ENCODE measurements at regions of chr3 and their contacts with region 1.

Region 1: DNA sequence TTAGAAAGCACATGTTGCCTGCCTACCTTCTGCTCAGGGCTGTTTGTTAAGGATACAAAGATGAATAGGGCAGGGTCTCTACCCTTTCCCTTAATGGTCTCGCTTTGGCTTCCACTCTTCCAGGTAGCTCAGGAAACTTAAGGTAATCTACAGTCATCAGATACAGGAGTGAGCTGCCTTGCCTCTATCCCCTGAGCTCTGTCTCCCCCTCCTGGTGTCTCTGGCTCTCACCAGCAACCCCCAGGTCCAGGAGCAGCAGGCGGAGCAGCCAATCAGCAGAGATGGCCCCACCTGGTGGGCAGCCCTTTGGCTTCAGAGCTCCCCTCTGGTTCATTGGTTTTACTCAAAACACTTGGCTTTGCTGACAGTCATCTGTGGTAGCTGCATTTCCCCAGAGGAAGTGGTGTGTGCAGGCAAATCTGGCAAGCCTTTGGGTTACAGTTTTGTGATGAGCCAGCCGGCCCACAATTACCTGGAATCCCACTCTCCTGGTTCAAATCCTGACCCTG is 8.5 kb upstream of the CX3CR1 start:
- DNase-seq: peak; percentile 74 to 82
- H3K4me3 ChIP-seq: no peak overlapping the region
- H3K27ac ChIP-seq: no peak overlapping the region
- H3K4me1 ChIP-seq: peaks cover 4% of the 10 kb centered on the region; the same call in 1 of the 2 replicates
- H3K27me3 ChIP-seq: no peaks in the 10 kb centered on the region
- CTCF ChIP-seq: peak; percentile 88

Region 2: DNA sequence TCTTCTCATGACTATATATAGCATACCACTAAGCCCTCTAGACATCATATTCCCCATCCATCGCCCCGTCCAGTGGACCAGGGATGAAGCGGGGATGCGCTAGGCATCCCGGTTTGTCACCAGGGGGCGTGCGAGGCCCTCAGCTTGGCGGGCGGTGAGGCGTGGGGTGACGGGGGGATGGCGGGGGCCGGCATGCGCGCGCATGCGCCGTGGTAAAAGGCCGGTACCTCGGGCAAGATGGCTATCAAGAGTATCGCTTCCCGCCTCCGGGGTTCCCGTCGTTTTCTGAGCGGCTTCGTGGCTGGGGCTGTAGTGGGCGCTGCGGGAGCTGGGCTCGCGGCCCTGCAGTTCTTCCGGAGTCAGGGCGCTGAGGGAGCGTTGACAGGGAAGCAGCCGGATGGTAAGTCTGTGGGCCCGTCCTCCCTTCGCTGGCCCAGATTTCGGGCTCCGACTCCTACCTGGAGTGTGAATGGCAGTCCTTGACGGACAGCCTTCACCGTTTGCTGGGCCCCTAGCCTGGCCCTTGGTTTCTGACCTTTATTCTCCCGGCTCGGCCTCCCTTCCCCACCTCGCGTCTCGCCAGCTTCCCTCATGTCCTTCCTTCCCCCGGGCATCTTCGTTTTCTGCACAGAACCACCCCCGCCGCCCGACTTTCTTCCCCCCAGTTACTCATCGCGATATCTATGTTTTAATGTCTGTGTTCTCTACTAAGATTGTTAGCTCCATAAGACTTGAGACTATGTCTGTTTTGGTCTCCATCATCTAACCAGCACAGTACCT is 792.0 kb before region 1 on chr3 and contains the start of gene EXOG:
- CTCF ChIA-PET with region 1: no interaction called
- POLR2A ChIA-PET with region 1: no interaction called
- intact Hi-C with region 1: loop called (anchors 1 kb)
- DNase-seq: peak; percentile 71 to 88
- H3K4me3 ChIP-seq: peak within 1 kb of the TSS; percentile 88
- H3K27ac ChIP-seq: no peak within 1 kb of the TSS
- H3K4me1 ChIP-seq: 0 out of 2 replicates have a peak, but pooled peaks cover 4% of the 10 kb centered on the region
- H3K27me3 ChIP-seq: no peaks in the 10 kb centered on the region
- CTCF ChIP-seq: peak; percentile 85
- total RNA-seq, gene EXOG: 7.5 and 9.3 TPM in 2 replicates

Region 3: DNA sequence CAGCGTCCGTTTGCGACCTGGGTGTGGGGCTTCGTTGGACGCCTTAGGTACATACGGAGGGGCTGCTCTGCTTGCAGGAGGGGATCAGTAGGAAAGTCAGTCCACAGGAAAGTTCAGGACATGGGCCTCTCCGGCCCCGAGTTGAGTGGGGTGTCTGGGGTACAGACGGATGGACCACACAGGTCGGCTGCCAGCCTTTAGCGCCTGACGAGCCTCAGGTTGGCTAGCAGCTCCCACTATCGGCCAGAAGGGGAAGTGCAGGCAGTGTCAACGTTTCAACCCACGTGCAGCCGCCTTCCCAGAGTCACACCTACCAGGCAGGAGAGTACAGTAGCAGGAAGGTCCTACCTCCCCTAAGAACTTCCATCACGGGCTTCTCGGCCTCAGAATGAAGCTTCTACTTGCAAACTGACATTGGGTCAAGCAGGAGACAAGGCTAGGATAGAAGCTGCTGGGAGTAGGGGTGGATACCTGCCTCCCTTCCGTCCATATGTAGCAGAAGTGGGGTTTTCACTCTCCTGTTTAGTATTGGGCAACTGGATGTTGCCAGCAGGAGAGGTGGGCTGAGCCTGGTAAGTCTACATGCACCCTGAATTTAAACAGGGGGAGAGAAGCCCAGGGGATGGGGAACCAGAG is 637.1 kb before region 1 on chr3:
- CTCF ChIA-PET with region 1: no interaction called
- POLR2A ChIA-PET with region 1: no interaction called
- intact Hi-C with region 1: loop called (anchors 10 kb)
- DNase-seq: peak in 1 of 2 experiments; percentile 50
- H3K4me3 ChIP-seq: no peak overlapping the region
- H3K27ac ChIP-seq: no peak overlapping the region
- H3K4me1 ChIP-seq: no peaks in the 10 kb centered on the region
- H3K27me3 ChIP-seq: no peaks in the 10 kb centered on the region; the same call in 1 of the 2 replicates
- CTCF ChIP-seq: peak; percentile 83

Region 4: GRCh38 chr3:39025222-39025970 is 263.0 kb before region 1 on chr3:
- CTCF ChIA-PET with region 1: interaction called, 4 read pairs
- POLR2A ChIA-PET with region 1: no interaction called
- intact Hi-C with region 1: loop called (anchors 1 kb)
- DNase-seq: no peak
- H3K4me3 ChIP-seq: no peak overlapping the region
- H3K27ac ChIP-seq: no peak overlapping the region
- H3K4me1 ChIP-seq: no peaks in the 10 kb centered on the region
- H3K27me3 ChIP-seq: peaks cover 29% of the 10 kb centered on the region; the same call in 1 of the 2 replicates
- CTCF ChIP-seq: no peak

Region 5: DNA sequence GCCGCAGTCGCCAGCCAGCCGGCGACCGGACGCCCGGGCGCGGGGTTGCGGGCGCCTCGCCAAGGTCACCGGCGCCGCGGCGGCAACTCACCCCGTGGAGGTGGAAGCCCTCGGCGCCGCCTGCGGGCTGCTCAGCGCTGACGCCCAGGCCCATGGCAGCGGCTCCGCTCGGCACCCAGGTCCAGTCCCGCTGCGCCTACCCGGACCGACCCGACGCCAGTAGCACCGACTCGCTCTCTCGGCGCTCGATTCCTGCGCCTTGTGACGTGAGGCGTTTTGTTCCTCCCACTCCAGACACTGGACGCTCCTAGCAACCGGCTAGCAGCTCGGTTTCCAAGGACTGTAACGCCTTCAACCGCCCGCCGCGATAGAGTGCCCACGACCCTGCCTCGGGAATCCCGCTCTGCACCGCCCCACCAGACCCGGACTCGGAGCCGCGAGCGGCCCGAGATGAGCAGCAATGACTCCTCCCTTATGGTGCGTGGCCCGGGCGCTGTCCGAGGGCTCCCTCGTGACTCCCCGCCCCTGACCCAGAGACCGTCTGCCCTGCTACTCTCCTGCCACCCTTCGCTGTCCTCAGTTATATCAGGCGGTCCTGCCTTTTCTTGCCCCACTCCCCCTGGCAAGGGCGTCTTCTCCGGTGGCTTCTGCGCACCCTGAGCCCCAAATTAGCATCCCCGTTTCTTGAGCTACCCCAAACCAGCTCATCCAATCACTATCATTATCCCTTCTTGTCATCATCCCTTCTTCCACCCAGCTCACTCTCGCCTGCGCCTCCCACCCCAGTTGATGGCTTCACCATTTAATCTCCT is 180.8 kb before region 1 on chr3 and contains the starts of genes GORASP1 and TTC21A:
- CTCF ChIA-PET with region 1: interaction called, 5 read pairs
- POLR2A ChIA-PET with region 1: no interaction called
- intact Hi-C with region 1: loop called (anchors 1 kb)
- DNase-seq: peak; percentile 64 to 71
- H3K4me3 ChIP-seq: peak within 1 kb of the TSS; percentile 95
- H3K27ac ChIP-seq: no peak within 1 kb of the TSS
- H3K4me1 ChIP-seq: peaks cover 16% of the 10 kb centered on the region
- H3K27me3 ChIP-seq: no peaks in the 10 kb centered on the region
- CTCF ChIP-seq: no peak
- total RNA-seq, gene GORASP1: 43.4 and 44.4 TPM in 2 replicates
- total RNA-seq, gene TTC21A: 9.0 and 9.5 TPM in 2 replicates

Region 6: GRCh38 chr3:39189959-39190269 is 98.4 kb before region 1 on chr3:
- CTCF ChIA-PET with region 1: interaction called, 9 read pairs
- POLR2A ChIA-PET with region 1: no interaction called
- intact Hi-C with region 1: loop called (anchors 1 kb)
- DNase-seq: peak; percentile 47 to 51
- H3K4me3 ChIP-seq: no peak overlapping the region
- H3K27ac ChIP-seq: no peak overlapping the region
- H3K4me1 ChIP-seq: no peaks in the 10 kb centered on the region
- H3K27me3 ChIP-seq: no peaks in the 10 kb centered on the region
- CTCF ChIP-seq: peak; percentile 77

Region 7: GRCh38 chr3:39855517-39855916 is 567.2 kb after region 1 on chr3:
- CTCF ChIA-PET with region 1: no interaction called
- POLR2A ChIA-PET with region 1: no interaction called
- intact Hi-C with region 1: no loop called
- DNase-seq: no peak
- H3K4me3 ChIP-seq: no peak overlapping the region
- H3K27ac ChIP-seq: no peak overlapping the region
- H3K4me1 ChIP-seq: no peaks in the 10 kb centered on the region
- H3K27me3 ChIP-seq: no peaks in the 10 kb centered on the region
- CTCF ChIP-seq: no peak